ENCODE measurements at regions of chr10 and their contacts with region 1.

Region 1: DNA sequence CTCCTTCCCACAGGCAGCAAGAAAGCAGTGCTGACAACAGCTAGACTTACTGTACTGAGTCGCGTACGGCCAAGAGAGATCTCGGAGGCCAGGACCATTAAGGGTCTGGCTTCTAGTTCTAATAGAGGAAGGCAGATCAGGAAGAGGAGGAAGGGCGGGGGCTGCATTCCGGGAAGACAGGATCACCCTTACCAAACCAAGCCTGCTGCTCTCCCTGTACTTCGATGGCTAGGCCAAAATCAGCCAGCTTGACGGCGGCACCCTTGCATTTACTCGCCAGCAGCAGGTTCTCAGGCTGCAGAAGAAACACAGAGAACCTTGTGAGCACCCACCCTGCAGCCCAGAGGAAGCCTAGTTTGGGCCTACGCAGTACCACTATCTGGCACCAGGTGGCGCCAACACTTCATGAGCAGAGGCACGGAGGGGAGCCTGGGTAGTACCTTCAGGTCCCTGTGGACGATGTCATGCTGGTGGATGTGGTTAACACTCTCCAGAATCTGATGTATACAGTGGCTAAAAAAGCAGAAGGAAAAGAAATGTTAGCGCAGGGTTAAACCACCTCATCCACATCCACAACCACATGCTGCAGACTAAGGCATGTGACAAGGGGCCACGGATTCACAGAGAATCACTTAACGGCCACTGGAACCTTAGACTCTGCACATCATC is 25.4 kb downstream of the CAMK2G start:
- DNase-seq: peak; percentile 66 to 82
- H3K4me3 ChIP-seq: no peak overlapping the region
- H3K27ac ChIP-seq: no peak overlapping the region
- H3K4me1 ChIP-seq: no peaks in the 10 kb centered on the region
- H3K27me3 ChIP-seq: no peaks in the 10 kb centered on the region
- CTCF ChIP-seq: peak; percentile 100

Region 2: DNA sequence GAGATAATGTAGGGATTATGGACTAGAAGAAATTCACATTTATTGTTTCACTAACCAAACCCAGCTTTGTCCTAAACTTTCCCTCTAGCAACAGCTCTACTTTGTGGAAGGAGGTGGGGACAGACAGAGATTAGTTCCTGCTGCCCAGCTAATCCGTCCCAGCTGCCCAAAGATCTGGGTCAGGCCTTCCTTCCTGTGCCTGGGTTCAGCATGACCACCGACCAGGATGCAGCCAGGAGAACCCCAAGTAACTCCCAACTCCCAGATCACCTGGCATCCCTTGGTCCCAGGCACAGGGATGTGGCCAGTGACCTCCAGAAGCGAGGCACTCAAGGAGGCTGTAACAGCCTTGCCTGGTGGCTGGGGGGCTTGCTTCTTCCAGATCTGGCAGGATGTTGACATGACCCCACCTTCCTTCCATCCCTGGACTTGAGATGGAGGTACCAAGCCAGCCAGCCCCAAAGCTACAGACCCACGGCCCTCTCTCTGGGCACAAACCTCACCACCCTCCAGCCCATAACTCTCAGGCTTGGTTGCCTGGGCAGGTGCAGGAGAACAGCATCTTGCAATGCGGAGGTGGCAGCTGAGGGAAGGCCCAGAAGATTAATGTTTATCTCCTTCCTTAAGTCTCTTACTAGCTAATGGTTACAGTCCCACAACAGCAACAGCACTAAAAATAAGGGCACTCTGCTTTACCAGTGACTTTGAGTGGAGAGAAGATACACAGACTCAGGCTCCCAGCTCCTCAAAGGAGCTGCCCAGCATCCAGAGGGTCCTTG is 14.3 kb after region 1 on chr10:
- CTCF ChIA-PET with region 1: interaction called, 10 read pairs
- POLR2A ChIA-PET with region 1: no interaction called
- intact Hi-C with region 1: no loop called
- DNase-seq: no peak
- H3K4me3 ChIP-seq: no peak overlapping the region
- H3K27ac ChIP-seq: no peak overlapping the region
- H3K4me1 ChIP-seq: peaks cover 4% of the 10 kb centered on the region; the same call in 1 of the 2 replicates
- H3K27me3 ChIP-seq: no peaks in the 10 kb centered on the region
- CTCF ChIP-seq: no peak

Region 3: DNA sequence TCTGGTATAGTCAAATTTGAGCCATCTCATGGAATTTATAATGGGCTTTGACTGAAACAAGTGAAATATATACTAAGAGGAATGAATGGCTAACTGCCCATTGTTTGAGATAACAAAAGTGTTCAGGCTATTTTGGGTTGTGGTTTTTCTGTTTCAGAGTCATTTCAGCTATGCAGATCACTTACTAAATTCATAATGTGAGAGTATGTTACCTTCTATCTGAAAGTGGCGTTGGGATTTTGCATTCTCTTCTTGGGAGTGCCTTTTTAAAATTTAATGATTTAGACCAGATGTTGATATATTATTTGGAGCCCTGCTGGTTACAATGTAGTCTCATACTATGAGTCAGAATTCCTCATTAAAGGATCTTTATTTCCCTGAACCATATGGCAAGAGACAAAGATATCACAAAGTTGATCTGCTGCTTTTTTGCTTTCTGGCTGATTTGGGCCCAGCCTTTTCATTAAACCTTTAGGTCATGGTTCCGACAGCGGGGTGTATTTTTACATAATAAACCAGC is 159.3 kb after region 1 on chr10:
- CTCF ChIA-PET with region 1: interaction called, 11 read pairs
- POLR2A ChIA-PET with region 1: no interaction called
- intact Hi-C with region 1: no loop called
- DNase-seq: peak in 1 of 2 experiments; percentile 72
- H3K4me3 ChIP-seq: no peak overlapping the region
- H3K27ac ChIP-seq: peak overlapping the region; percentile 25
- H3K4me1 ChIP-seq: peaks cover 62% of the 10 kb centered on the region
- H3K27me3 ChIP-seq: no peaks in the 10 kb centered on the region
- CTCF ChIP-seq: no peak

Region 4: GRCh38 chr10:75187961-75188426 is 1339.0 kb after region 1 on chr10:
- CTCF ChIA-PET with region 1: no interaction called
- POLR2A ChIA-PET with region 1: no interaction called
- intact Hi-C with region 1: no loop called
- DNase-seq: peak; percentile 73 to 96
- H3K4me3 ChIP-seq: no peak overlapping the region; the same call in 1 of the 2 replicates
- H3K27ac ChIP-seq: peak overlapping the region; percentile 49
- H3K4me1 ChIP-seq: peaks cover 57% of the 10 kb centered on the region
- H3K27me3 ChIP-seq: no peaks in the 10 kb centered on the region
- CTCF ChIP-seq: peak; percentile 84

Measured in PC-9 (cell line).